CD4-positive, alpha-beta T cell (primary cell): ENCODE measurements at regions of chr10 and their contacts with region 1.

Region 1: GRCh38 chr10:15168781-15169554 is 475 bp upstream of the NMT2 start:
- DNase-seq: peak; percentile 92 to 99 (median 97)
- ATAC-seq: peak; percentile 82
- H3K4me3 ChIP-seq: peak overlapping the region; percentile 56
- H3K4me3 Mint-ChIP-seq: peak overlapping the region; percentile 91
- H3K27ac ChIP-seq: peak overlapping the region; percentile 48 to 50
- H3K27ac Mint-ChIP-seq: peak overlapping the region; percentile 94
- H3K4me1 ChIP-seq: peaks cover 51% of the 10 kb centered on the region
- H3K4me1 Mint-ChIP-seq: peaks cover 72% of the 10 kb centered on the region
- H3K27me3 ChIP-seq: no peaks in the 10 kb centered on the region
- H3K27me3 Mint-ChIP-seq: no peaks in the 10 kb centered on the region
- CTCF ChIP-seq: no peak

Region 2: GRCh38 chr10:14385596-14386593 is 783.1 kb before region 1 on chr10:
- CTCF ChIA-PET with region 1: no interaction called
- POLR2A ChIA-PET with region 1: no interaction called
- intact Hi-C with region 1: no loop called
- DNase-seq: peak in 6 of 14 experiments; percentile 2 to 34 (median 11)
- ATAC-seq: no peak
- H3K4me3 ChIP-seq: no peak overlapping the region
- H3K4me3 Mint-ChIP-seq: no peak overlapping the region
- H3K27ac ChIP-seq: no peak overlapping the region
- H3K27ac Mint-ChIP-seq: no peak overlapping the region
- H3K4me1 ChIP-seq: peaks cover 34% of the 10 kb centered on the region
- H3K4me1 Mint-ChIP-seq: peaks cover 54% of the 10 kb centered on the region
- H3K27me3 ChIP-seq: no peaks in the 10 kb centered on the region
- H3K27me3 Mint-ChIP-seq: no peaks in the 10 kb centered on the region
- CTCF ChIP-seq: no peak

Region 3: DNA sequence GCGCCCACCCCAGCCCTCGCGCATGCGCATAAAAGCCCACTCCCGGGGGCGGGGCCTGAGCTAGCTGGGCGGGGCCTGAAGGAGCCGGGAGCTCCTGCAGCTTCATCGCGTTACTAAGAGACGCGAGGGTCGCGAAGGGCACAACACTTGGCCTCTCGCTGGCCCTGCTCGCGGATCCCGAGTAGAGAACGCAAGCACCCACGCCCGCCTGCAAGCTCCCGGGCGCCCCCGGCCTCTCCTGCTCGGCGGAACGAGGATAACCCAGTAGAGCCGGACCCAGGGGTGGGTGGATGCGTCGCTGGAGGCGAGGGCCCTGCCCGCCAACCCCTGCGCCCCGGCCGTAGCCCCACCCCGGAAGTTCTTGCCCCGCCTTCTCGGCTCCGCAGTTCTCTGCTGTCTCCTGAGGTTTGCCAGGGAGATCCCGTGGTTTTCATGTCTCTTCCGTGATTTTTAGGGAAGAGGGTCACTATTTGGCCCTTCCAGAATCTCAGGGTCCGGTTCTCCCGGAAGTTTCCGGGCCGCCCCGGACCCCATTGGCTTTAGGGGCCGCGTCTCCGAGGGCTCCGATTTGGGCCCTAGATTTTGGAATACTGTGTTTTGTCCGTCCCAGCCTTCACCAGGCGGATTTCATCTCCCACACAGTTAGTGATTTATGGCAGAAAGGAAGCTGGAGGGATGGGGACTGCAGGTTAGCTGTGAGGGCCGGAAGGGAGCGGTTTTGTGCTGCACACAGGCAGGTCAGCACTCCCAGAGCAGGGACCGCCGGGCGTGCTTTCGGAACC is 209.5 kb before region 1 on chr10 and contains the start of gene MEIG1:
- CTCF ChIA-PET with region 1: no interaction called
- POLR2A ChIA-PET with region 1: interaction called, 4 read pairs
- intact Hi-C with region 1: loop called in 1 of 2 experiments (anchors 5 kb)
- DNase-seq: peak; percentile 83 to 96 (median 88)
- ATAC-seq: peak; percentile 85
- H3K4me3 ChIP-seq: peak within 1 kb of the TSS; percentile 83
- H3K4me3 Mint-ChIP-seq: peak within 1 kb of the TSS; percentile 98
- H3K27ac ChIP-seq: peak within 1 kb of the TSS; percentile 86 to 92
- H3K27ac Mint-ChIP-seq: peak within 1 kb of the TSS; percentile 98
- H3K4me1 ChIP-seq: peaks cover 30% of the 10 kb centered on the region
- H3K4me1 Mint-ChIP-seq: peaks cover 34% of the 10 kb centered on the region
- H3K27me3 ChIP-seq: no peaks in the 10 kb centered on the region
- H3K27me3 Mint-ChIP-seq: no peaks in the 10 kb centered on the region
- CTCF ChIP-seq: no peak
- total RNA-seq, gene MEIG1: not detected

Region 4: DNA sequence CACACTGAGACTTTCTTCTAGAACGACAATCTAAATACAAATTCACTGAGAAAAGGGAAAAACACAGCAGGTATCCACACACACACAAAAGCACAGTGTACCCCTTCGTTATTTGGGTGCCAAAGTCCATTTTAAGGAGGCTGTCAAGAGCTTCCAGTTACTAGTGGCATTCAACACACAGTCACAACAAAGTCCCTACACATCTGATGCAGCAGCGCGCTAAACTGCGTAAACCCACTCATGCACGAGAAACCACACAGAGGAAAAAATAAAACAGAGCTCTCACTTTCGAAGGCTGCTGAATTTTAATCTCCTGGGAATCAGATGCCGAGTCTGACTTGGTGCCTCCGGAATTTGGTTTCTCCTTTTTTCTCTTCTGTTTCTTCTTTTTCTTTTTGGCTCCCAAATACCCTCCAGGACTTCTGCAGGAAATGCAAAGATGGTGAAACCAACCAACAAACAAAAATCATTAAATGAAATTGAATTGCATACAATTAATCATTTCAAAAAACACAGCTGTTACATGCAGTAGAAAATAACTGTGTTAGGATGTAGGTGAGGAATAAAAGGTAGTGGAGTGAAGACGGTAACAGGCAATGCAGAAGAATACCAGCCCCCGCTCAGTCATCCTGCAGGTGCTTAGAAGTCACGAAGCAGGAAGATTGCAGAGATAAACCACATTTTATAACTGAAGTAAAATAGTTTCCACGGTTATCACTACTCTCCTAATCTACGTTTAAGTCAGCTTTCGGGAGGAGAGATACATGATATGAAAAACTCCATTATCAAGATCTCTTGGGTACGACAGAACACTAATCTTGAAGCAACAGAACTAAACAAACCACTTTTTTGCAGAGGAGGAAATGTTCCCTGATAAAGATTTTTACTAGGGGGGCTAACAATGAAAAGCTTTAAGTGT is 27.6 kb before region 1 on chr10:
- CTCF ChIA-PET with region 1: no interaction called
- POLR2A ChIA-PET with region 1: interaction called, 4 read pairs
- intact Hi-C with region 1: loop called in 1 of 2 experiments (anchors 2 kb)
- DNase-seq: peak in 1 of 14 experiments; percentile 37
- ATAC-seq: peak; percentile 68
- H3K4me3 ChIP-seq: no peak overlapping the region
- H3K4me3 Mint-ChIP-seq: peak overlapping the region; percentile 75
- H3K27ac ChIP-seq: no peak overlapping the region
- H3K27ac Mint-ChIP-seq: peak overlapping the region; percentile 72
- H3K4me1 ChIP-seq: peaks cover 19% of the 10 kb centered on the region
- H3K4me1 Mint-ChIP-seq: peaks cover 60% of the 10 kb centered on the region
- H3K27me3 ChIP-seq: no peaks in the 10 kb centered on the region
- H3K27me3 Mint-ChIP-seq: no peaks in the 10 kb centered on the region
- CTCF ChIP-seq: no peak

Region 5: GRCh38 chr10:15189133-15189885 is 20.3 kb after region 1 on chr10:
- CTCF ChIA-PET with region 1: interaction called, 3 read pairs
- POLR2A ChIA-PET with region 1: interaction called, 24 read pairs
- intact Hi-C with region 1: loop called in 1 of 2 experiments (anchors 2 kb)
- DNase-seq: no peak
- ATAC-seq: no peak
- H3K4me3 ChIP-seq: no peak overlapping the region
- H3K4me3 Mint-ChIP-seq: peak overlapping the region; percentile 49
- H3K27ac ChIP-seq: no peak overlapping the region
- H3K27ac Mint-ChIP-seq: peak overlapping the region; percentile 60
- H3K4me1 ChIP-seq: peaks cover 56% of the 10 kb centered on the region
- H3K4me1 Mint-ChIP-seq: peaks cover 45% of the 10 kb centered on the region
- H3K27me3 ChIP-seq: no peaks in the 10 kb centered on the region
- H3K27me3 Mint-ChIP-seq: no peaks in the 10 kb centered on the region
- CTCF ChIP-seq: no peak

Region 6: DNA sequence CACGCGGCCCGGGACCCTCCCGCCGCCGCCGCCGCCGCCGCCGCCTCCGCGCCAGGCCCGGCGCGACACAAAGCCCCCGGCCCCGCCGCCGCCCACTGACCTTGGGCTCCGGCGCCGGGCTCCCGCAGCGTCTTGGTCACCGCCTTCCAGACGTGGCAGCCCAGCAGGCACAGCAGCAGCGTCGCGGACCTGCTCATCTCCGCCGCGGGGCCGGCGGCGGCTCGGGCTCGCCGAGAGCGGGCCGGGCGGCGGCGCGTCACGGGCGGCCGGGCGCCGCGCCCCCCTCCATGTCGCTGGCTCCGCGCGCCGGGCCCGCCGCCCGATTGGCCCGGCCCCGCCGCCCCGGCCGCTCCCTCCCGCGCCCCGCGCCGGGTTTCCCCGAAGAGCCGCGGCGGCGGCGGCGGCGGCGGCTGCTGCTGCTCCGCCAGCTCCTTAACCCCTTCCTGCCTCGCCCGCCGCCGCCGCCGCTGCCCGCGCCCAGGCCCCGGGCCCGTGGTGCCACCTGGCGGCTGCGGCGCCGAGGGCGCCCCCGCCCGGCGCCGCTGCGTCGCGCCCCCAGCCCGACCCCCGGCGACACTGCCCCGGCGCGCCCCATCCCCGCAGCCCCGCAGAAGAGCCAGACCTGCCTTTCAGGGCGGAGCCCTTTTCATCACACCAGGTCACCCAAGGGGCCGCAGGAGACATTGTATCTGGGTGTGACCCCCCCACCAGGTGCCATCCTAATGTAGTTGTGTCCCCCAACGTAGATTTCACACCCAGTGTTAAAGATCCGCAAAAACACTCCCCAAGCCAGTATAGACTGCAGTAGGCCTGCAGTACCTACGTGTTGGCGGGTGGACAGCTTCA is 202.1 kb after region 1 on chr10 and contains the start of gene FAM171A1:
- CTCF ChIA-PET with region 1: interaction called, 3 read pairs
- POLR2A ChIA-PET with region 1: interaction called, 3 read pairs
- intact Hi-C with region 1: loop called in 1 of 2 experiments (anchors 10 kb)
- DNase-seq: peak; percentile 47 to 88 (median 62)
- ATAC-seq: peak; percentile 79
- H3K4me3 ChIP-seq: peak within 1 kb of the TSS; percentile 43
- H3K4me3 Mint-ChIP-seq: peak within 1 kb of the TSS; percentile 83
- H3K27ac ChIP-seq: no peak within 1 kb of the TSS
- H3K27ac Mint-ChIP-seq: no peak within 1 kb of the TSS
- H3K4me1 ChIP-seq: peaks cover 16% of the 10 kb centered on the region
- H3K4me1 Mint-ChIP-seq: peaks cover 9% of the 10 kb centered on the region
- H3K27me3 ChIP-seq: peaks cover 6 to 11% of the 10 kb centered on the region in 2 experiments
- H3K27me3 Mint-ChIP-seq: peaks cover 10% of the 10 kb centered on the region
- CTCF ChIP-seq: no peak
- total RNA-seq, gene FAM171A1: 1.8 to 2.6 TPM